Naive thymus-derived CD4-positive, alpha-beta T cell (primary cell): ENCODE measurements at regions of chr1 and their contacts with region 1.

Region 1: DNA sequence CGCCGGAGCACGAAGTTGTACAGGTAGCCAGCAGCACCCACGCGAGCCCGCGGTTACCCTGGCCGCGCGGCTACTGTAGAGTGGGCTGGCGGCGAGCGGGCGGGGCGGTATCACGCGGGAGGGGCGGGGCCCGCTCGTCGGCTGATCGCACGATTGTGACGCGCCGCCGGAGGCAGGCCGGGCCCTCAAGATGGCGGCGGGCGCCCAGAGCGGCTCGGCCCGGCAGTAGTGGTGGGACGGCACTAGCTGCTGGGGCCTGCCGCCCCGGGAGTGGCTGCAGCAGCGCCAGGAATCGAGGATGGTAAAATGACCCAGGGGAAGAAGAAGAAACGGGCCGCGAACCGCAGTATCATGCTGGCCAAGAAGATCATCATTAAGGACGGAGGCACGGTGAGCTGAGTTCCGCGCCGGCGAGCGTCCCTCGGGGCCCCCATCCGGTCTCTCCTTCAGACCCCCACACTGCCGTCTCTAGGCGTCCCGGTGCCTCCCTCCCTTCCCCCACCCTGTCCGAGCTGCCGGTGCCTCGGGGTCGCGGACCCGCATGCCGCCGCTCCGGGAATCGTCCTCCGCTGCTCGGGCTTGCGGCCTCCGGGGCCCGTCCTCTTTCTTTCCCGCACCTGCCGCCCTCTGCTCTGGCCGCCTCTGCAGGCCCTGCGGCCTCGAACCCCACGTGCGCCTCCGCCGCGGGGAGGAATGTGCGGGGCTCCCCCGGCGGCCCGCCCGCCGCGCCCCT is 68.3 kb downstream of the SLC35A3 start:
- DNase-seq: peak; percentile 83 to 92 (median 88)
- ATAC-seq: peak; percentile 91
- H3K4me3 ChIP-seq: peak overlapping the region; percentile 70
- H3K4me3 Mint-ChIP-seq: peak overlapping the region; percentile 93 to 99 (median 97)
- H3K27ac ChIP-seq: peak overlapping the region; percentile 99
- H3K27ac Mint-ChIP-seq: peak overlapping the region; percentile 97 to 100 (median 99)
- H3K4me1 ChIP-seq: peaks cover 22 to 31% of the 10 kb centered on the region in 2 donors
- H3K4me1 Mint-ChIP-seq: peaks cover 29 to 68% (median 58%) of the 10 kb centered on the region in 7 donors
- H3K27me3 ChIP-seq: no peaks in the 10 kb centered on the region
- H3K27me3 Mint-ChIP-seq: no peaks in the 10 kb centered on the region

Region 2: DNA sequence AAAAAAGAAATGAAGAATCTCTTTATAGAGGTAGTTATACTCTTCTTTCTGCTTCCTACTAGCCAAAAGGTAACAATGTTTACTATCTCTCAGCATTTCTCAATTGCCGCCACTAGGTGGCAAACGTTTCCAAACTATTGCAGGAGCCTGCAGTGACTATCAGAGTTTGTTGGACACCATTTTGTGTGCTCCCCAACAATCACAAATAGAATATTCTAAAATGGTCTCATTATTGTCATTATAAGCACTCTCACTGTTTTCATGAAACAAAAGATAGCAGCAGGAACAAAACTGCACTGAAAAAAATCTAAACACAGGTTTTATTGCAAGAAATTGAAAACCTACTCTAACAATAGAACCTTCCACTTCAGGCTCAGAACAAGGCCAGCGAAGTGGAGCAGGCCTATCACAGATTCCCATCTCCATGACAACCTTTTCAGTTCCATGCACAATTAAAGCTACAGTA is 857.7 kb before region 1 on chr1:
- CTCF ChIA-PET with region 1: no interaction called
- POLR2A ChIA-PET with region 1: no interaction called
- intact Hi-C with region 1: loop called in 1 of 2 experiments (anchors 5 kb)
- DNase-seq: peak in 8 of 9 donors; percentile 17 to 65 (median 51)
- ATAC-seq: peak; percentile 82
- H3K4me3 ChIP-seq: no peak overlapping the region
- H3K4me3 Mint-ChIP-seq: no peak overlapping the region
- H3K27ac ChIP-seq: no peak overlapping the region
- H3K27ac Mint-ChIP-seq: no peak overlapping the region
- H3K4me1 ChIP-seq: no peaks in the 10 kb centered on the region
- H3K4me1 Mint-ChIP-seq: no peaks in the 10 kb centered on the region
- H3K27me3 ChIP-seq: no peaks in the 10 kb centered on the region
- H3K27me3 Mint-ChIP-seq: peaks cover 0 to 6% (median 0%) of the 10 kb centered on the region in 5 donors

Region 3: GRCh38 chr1:99969729-99970621 is 68.1 kb before region 1 on chr1 and contains the start of gene SLC35A3:
- CTCF ChIA-PET with region 1: no interaction called
- POLR2A ChIA-PET with region 1: interaction called, 22 read pairs
- intact Hi-C with region 1: loop called (anchors 1 kb)
- DNase-seq: peak; percentile 69 to 85 (median 78)
- ATAC-seq: peak; percentile 89
- H3K4me3 ChIP-seq: peak within 1 kb of the TSS; percentile 75
- H3K4me3 Mint-ChIP-seq: peak within 1 kb of the TSS; percentile 96 to 100 (median 100)
- H3K27ac ChIP-seq: peak within 1 kb of the TSS; percentile 83
- H3K27ac Mint-ChIP-seq: peak within 1 kb of the TSS; percentile 91 to 99 (median 97)
- H3K4me1 ChIP-seq: peaks cover 6 to 20% of the 10 kb centered on the region in 2 donors
- H3K4me1 Mint-ChIP-seq: peaks cover 22 to 55% (median 40%) of the 10 kb centered on the region in 7 donors
- H3K27me3 ChIP-seq: no peaks in the 10 kb centered on the region
- H3K27me3 Mint-ChIP-seq: no peaks in the 10 kb centered on the region
- total RNA-seq, gene SLC35A3: 21.1 to 31.6 (median 27.3) TPM

Region 4: DNA sequence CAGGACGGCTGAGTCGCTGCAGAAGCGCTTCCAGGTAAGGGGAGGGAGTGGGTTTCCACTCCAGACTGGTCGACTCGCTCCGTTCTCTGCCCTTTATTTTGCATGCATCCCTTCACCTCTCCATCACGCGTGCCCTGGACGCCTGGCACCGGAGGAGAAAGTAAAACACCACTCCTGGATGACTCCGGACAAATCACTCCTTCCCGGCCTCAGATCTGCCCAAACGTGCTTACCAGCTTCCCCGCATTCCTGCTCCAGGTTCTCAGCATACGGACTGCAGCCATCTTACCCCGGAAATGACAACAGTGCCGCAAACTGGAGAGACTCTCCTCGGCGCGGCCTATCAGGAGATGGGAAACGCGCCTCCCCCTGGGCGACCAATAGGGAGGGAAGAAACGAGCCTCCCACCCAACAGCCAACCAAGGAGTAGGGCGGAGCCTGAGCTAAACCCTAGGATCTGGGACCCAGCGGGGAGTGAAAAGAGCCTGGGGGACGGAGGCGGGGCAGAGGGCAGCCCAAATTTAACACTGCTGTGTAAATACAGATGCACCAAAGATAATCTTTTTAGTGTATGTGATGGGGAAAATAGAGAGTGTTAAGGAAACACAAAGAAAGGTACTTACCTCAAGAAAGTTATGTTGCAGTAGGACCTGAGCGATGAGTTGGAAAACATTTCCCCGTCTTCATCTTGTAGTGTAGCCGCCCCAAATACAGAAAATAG is 211.6 kb after region 1 on chr1 and contains the start of gene DBT:
- CTCF ChIA-PET with region 1: no interaction called
- POLR2A ChIA-PET with region 1: interaction called, 4 read pairs
- intact Hi-C with region 1: loop called (anchors 1 kb)
- DNase-seq: peak; percentile 64 to 93 (median 88)
- ATAC-seq: peak; percentile 100
- H3K4me3 ChIP-seq: peak within 1 kb of the TSS; percentile 82
- H3K4me3 Mint-ChIP-seq: peak within 1 kb of the TSS in 1 of 10 donors; percentile 30
- H3K27ac ChIP-seq: peak within 1 kb of the TSS; percentile 79
- H3K27ac Mint-ChIP-seq: peak within 1 kb of the TSS in 2 of 9 donors; percentile 22 to 26
- H3K4me1 ChIP-seq: peaks cover 7 to 23% of the 10 kb centered on the region in 2 donors
- H3K4me1 Mint-ChIP-seq: peaks cover 9 to 24% (median 19%) of the 10 kb centered on the region in 7 donors
- H3K27me3 ChIP-seq: no peaks in the 10 kb centered on the region
- H3K27me3 Mint-ChIP-seq: peaks cover 0 to 8% (median 0%) of the 10 kb centered on the region in 5 donors
- total RNA-seq, gene DBT: 9.2 to 18.4 (median 9.7) TPM

Region 5: GRCh38 chr1:100452641-100453040 is 414.5 kb after region 1 on chr1:
- CTCF ChIA-PET with region 1: no interaction called
- POLR2A ChIA-PET with region 1: no interaction called
- intact Hi-C with region 1: loop called in 1 of 2 experiments (anchors 1 kb)
- DNase-seq: peak in 7 of 9 donors; percentile 41 to 81 (median 64)
- ATAC-seq: peak; percentile 95
- H3K4me3 ChIP-seq: no peak overlapping the region
- H3K4me3 Mint-ChIP-seq: peak overlapping the region; percentile 20 to 63 (median 50)
- H3K27ac ChIP-seq: peak overlapping the region; percentile 80
- H3K27ac Mint-ChIP-seq: peak overlapping the region; percentile 79 to 99 (median 93)
- H3K4me1 ChIP-seq: peaks cover 55 to 59% of the 10 kb centered on the region in 2 donors
- H3K4me1 Mint-ChIP-seq: peaks cover 29 to 92% (median 84%) of the 10 kb centered on the region in 7 donors
- H3K27me3 ChIP-seq: no peaks in the 10 kb centered on the region
- H3K27me3 Mint-ChIP-seq: no peaks in the 10 kb centered on the region

Region 6: DNA sequence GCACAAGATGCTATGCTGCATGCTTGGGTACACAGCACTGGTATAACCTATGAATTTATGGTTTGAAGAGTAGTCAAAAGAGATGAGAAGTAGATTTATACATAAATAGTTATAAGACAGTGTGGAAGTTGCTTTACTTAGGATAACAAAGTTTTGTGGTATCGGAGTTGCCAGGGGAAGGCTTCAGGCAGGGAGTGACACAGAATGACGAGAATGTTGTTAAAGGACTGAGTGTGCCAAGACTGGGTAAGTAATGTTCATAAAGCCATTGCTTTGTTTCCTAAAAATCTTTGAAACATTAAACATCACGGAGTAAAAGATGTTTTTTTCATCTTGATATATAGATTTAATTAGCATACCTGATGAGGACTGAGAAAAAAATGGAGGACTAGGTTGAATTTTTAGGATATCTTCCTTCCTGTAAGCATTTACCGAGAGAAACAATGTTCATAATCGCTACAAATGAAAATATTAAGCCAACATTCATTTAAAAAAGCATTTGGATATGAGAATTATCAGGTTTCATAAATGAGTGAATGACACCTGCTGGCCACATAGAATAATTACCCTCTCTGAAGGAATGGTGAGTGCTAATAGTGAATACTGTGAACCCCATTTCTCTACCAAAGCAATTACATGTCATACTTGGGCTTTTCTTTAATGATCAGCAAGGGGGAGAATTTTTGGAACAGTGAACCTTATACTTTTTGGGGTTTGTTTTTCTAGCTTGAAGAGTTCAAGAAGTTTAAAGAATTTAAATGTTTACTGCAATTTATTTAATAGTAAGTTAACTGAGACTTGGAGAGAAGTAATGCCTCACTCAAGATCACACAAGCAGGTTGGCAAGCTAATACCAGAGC is 828.2 kb after region 1 on chr1:
- CTCF ChIA-PET with region 1: no interaction called
- POLR2A ChIA-PET with region 1: no interaction called
- intact Hi-C with region 1: loop called in 1 of 2 experiments (anchors 1 kb)
- DNase-seq: peak in 4 of 9 donors; percentile 6 to 21 (median 14)
- ATAC-seq: peak; percentile 51
- H3K4me3 ChIP-seq: no peak overlapping the region
- H3K4me3 Mint-ChIP-seq: no peak overlapping the region
- H3K27ac ChIP-seq: no peak overlapping the region
- H3K27ac Mint-ChIP-seq: no peak overlapping the region
- H3K4me1 ChIP-seq: no peaks in the 10 kb centered on the region
- H3K4me1 Mint-ChIP-seq: peaks cover 0 to 2% (median 0%) of the 10 kb centered on the region in 7 donors
- H3K27me3 ChIP-seq: no peaks in the 10 kb centered on the region
- H3K27me3 Mint-ChIP-seq: no peaks in the 10 kb centered on the region